HEK293 (cell line): ENCODE measurements at regions of chr22 and their contacts with region 1.

Region 1: GRCh38 chr22:50498322-50498890 is 9.1 kb downstream of the LMF2 start:
- H3K4me3 ChIP-seq: no peak overlapping the region
- H3K27ac ChIP-seq: no peak overlapping the region; the same call in 1 of the 2 replicates
- H3K4me1 ChIP-seq: no peaks in the 10 kb centered on the region
- CTCF ChIP-seq: peak; percentile 80

Region 2: GRCh38 chr22:50452649-50453048 is 45.8 kb before region 1 on chr22:
- CTCF ChIA-PET with region 1: interaction called, 13 read pairs
- POLR2A ChIA-PET with region 1: interaction called, 3 read pairs
- H3K4me3 ChIP-seq: no peak overlapping the region
- H3K27ac ChIP-seq: no peak overlapping the region
- H3K4me1 ChIP-seq: no peaks in the 10 kb centered on the region
- CTCF ChIP-seq: no peak

Region 3: GRCh38 chr22:50469377-50470305 is 28.8 kb before region 1 on chr22:
- CTCF ChIA-PET with region 1: interaction called, 24 read pairs
- POLR2A ChIA-PET with region 1: interaction called, 9 read pairs
- H3K4me3 ChIP-seq: no peak overlapping the region
- H3K27ac ChIP-seq: peak overlapping the region; percentile 51; the same call in 1 of the 2 replicates
- H3K4me1 ChIP-seq: peaks cover 23% of the 10 kb centered on the region
- CTCF ChIP-seq: no peak

Region 4: DNA sequence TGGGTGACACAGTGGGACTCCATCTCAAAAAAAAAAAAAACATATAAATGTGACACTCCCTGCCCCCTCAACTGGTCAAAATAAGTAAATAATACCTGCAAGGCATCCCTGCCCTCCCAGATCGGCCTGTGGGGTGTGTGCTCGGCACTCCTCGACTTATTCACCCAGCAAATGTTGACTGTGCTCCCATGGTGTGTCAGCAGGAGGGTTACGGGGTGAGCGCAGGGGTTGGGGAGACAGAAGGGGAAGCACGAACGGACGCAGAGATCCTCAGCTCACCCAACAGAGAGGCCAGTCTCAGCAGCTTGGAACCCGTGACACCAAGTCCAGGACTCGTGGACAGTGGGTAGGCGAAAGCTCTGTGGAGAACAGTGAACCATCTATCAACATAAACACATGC is 18.7 kb before region 1 on chr22:
- CTCF ChIA-PET with region 1: interaction called, 21 read pairs
- POLR2A ChIA-PET with region 1: interaction called, 5 read pairs
- H3K4me3 ChIP-seq: no peak overlapping the region
- H3K27ac ChIP-seq: no peak overlapping the region
- H3K4me1 ChIP-seq: peaks cover 4% of the 10 kb centered on the region; the same call in 1 of the 2 replicates
- CTCF ChIP-seq: no peak

Region 5: DNA sequence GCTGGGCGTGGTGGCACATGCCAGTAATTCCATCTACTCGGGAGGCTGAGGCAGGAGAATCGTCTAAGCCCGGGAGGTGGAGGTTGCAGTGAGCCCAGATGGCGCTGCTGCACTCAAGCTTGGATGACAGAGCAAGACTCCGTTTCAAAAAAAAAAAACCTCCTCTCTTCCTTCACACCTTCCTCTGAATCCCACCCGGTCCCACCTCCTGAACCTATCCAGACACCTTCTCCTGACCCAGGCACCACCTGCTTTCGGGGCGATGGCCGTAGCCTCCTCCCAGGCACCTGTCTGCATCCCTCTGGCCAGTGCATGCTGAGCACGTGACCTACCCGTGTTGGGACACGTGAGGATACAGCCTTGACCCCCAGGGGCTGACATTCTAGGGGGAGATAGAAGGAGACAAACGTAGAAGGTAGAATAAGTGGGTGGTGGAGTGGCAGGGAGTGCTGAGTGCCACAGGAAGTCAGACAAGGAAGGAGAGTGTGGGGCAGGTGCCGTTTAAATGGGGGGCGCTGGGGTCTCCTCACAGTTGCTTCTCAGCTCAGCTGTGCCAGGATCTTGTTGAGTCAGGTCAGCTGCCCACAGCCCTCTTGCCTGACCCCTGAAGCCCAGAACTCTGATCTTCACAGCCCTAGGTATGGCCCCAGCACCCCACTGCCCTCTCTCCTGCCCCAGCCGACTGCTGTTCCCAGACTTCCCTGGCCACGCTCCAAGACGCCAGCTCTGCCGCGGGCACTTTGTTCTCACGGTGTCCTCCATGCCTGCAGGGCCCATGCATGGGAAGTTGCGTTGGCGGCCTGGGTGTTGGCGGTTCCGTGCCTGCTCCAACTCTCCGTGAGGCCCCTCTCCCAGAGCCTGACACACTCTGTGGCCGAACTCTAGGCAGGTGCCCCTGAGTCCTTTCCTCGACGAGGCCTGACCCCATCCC is 12.9 kb before region 1 on chr22:
- CTCF ChIA-PET with region 1: interaction called, 21 read pairs
- POLR2A ChIA-PET with region 1: interaction called, 8 read pairs
- H3K4me3 ChIP-seq: no peak overlapping the region
- H3K27ac ChIP-seq: no peak overlapping the region
- H3K4me1 ChIP-seq: no peaks in the 10 kb centered on the region
- CTCF ChIP-seq: peak; percentile 42; the same call in 1 of the 2 replicates